Activated CD4-positive, alpha-beta T cell treated with anti-CD3 and anti-CD28 coated beads for 36 hours (primary cell): ENCODE measurements at regions of chr2 and their contacts with region 1.

Region 1: GRCh38 chr2:73828818-73829570 is at the start of gene STAMBP:
- DNase-seq: peak; percentile 95
- ATAC-seq: peak; percentile 75
- H3K4me3 Mint-ChIP-seq: peak within 1 kb of the TSS; percentile 97
- H3K27ac Mint-ChIP-seq: peak within 1 kb of the TSS; percentile 98
- H3K4me1 Mint-ChIP-seq: peaks cover 53% of the 10 kb centered on the region
- H3K27me3 Mint-ChIP-seq: no peaks in the 10 kb centered on the region
- total RNA-seq, gene STAMBP: 104 to 111 TPM

Region 2: GRCh38 chr2:73685770-73686438 is 143.1 kb before region 1 on chr2:
- CTCF ChIA-PET with region 1: no interaction called
- POLR2A ChIA-PET with region 1: no interaction called
- intact Hi-C with region 1: no loop called
- DNase-seq: no peak
- ATAC-seq: no peak
- H3K4me3 Mint-ChIP-seq: no peak overlapping the region
- H3K27ac Mint-ChIP-seq: no peak overlapping the region
- H3K4me1 Mint-ChIP-seq: no peaks in the 10 kb centered on the region
- H3K27me3 Mint-ChIP-seq: no peaks in the 10 kb centered on the region

Region 3: GRCh38 chr2:73812635-73813034 is 16.4 kb before region 1 on chr2:
- CTCF ChIA-PET with region 1: interaction called, 25 read pairs
- POLR2A ChIA-PET with region 1: no interaction called
- intact Hi-C with region 1: no loop called
- DNase-seq: no peak
- ATAC-seq: no peak
- H3K4me3 Mint-ChIP-seq: no peak overlapping the region
- H3K27ac Mint-ChIP-seq: no peak overlapping the region
- H3K4me1 Mint-ChIP-seq: no peaks in the 10 kb centered on the region
- H3K27me3 Mint-ChIP-seq: peaks cover 10% of the 10 kb centered on the region

Region 4: GRCh38 chr2:73926493-73927338 is 97.7 kb after region 1 on chr2 and contains the start of gene DGUOK:
- CTCF ChIA-PET with region 1: interaction called, 6 read pairs
- POLR2A ChIA-PET with region 1: interaction called, 4 read pairs
- intact Hi-C with region 1: loop called (anchors 1 kb)
- DNase-seq: peak; percentile 99
- ATAC-seq: peak; percentile 99
- H3K4me3 Mint-ChIP-seq: peak within 1 kb of the TSS; percentile 87
- H3K27ac Mint-ChIP-seq: peak within 1 kb of the TSS; percentile 96
- H3K4me1 Mint-ChIP-seq: peaks cover 49% of the 10 kb centered on the region
- H3K27me3 Mint-ChIP-seq: no peaks in the 10 kb centered on the region
- total RNA-seq, gene DGUOK: 97.6 to 119 TPM

Region 5: DNA sequence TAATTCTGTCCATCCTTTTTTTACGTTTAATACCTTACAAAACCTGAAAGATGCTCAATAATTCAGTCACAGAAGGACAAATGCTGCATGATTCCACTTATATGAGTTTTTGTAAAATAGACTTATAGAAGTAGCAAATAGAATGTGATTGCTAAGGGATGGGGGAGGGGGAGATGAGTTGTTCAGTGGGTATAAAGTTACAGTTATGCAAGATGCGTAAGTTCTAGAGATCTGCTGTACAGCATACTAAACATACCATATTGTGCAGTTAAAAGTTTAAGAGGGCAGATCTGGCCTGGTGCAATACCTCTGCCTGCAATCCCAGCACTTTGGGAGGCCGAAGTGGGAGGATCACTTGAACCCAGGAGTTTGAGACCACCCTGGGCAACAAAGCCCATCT is 234.5 kb after region 1 on chr2:
- CTCF ChIA-PET with region 1: interaction called, 10 read pairs
- POLR2A ChIA-PET with region 1: no interaction called
- intact Hi-C with region 1: no loop called
- DNase-seq: no peak
- ATAC-seq: no peak
- H3K4me3 Mint-ChIP-seq: no peak overlapping the region
- H3K27ac Mint-ChIP-seq: no peak overlapping the region
- H3K4me1 Mint-ChIP-seq: peaks cover 20% of the 10 kb centered on the region
- H3K27me3 Mint-ChIP-seq: no peaks in the 10 kb centered on the region

Region 6: DNA sequence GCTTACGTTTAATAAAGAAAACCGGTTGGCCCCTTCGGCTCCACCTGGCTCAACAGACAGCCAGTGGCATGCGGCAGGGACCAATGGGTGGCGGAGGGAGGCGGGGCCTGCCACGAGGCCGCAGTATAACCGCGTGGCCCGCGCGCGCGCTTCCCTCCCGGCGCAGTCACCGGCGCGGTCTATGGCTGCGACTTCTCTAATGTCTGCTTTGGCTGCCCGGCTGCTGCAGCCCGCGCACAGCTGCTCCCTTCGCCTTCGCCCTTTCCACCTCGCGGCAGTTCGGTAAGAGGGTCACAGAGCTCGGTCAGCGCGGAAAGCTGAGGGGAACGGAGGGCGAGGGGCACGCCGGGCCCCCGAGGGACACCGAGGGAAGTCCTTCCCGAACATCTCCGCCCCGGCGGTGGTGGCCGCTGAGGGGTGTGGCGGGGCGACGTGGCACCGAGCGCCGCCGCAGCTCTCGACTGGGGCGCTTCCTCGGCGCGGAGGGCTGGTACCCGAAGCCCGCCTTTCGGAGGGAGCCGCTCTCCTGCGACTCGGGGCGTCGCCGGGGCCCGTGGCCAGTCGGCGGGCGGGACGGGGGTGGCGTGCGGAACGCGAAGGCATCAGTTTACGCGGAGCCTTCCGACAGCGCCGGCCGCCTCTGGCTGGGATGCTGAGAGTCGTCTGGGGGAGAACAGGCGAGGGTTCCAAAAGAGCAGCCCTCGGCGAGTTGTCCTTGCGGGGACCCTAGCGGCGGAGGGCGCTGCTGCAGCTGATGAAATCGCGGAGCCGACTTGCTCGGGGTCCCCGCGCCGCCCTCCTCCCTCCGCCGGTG is 369.7 kb after region 1 on chr2 and contains the start of gene MTHFD2:
- CTCF ChIA-PET with region 1: interaction called, 4 read pairs
- POLR2A ChIA-PET with region 1: no interaction called
- intact Hi-C with region 1: loop called (anchors 1 to 5 kb)
- DNase-seq: peak; percentile 96
- ATAC-seq: peak; percentile 90
- H3K4me3 Mint-ChIP-seq: peak within 1 kb of the TSS; percentile 100
- H3K27ac Mint-ChIP-seq: peak within 1 kb of the TSS; percentile 100
- H3K4me1 Mint-ChIP-seq: peaks cover 40% of the 10 kb centered on the region
- H3K27me3 Mint-ChIP-seq: no peaks in the 10 kb centered on the region
- total RNA-seq, gene MTHFD2: 411 to 453 TPM